ENCODE measurements at regions of chr1 and their contacts with region 1.

Region 1: GRCh38 chr1:238177956-238178645 is 287.4 kb upstream of the ZP4 start:
- DNase-seq: no peak
- ATAC-seq: no peak
- H3K4me3 ChIP-seq: no peak overlapping the region
- H3K4me3 Mint-ChIP-seq: no peak overlapping the region
- H3K27ac ChIP-seq: no peak overlapping the region
- H3K27ac Mint-ChIP-seq: no peak overlapping the region
- H3K4me1 ChIP-seq: no peaks in the 10 kb centered on the region
- H3K4me1 Mint-ChIP-seq: no peaks in the 10 kb centered on the region
- H3K27me3 ChIP-seq: no peaks in the 10 kb centered on the region
- H3K27me3 Mint-ChIP-seq: no peaks in the 10 kb centered on the region
- CTCF ChIP-seq: no peak

Region 2: DNA sequence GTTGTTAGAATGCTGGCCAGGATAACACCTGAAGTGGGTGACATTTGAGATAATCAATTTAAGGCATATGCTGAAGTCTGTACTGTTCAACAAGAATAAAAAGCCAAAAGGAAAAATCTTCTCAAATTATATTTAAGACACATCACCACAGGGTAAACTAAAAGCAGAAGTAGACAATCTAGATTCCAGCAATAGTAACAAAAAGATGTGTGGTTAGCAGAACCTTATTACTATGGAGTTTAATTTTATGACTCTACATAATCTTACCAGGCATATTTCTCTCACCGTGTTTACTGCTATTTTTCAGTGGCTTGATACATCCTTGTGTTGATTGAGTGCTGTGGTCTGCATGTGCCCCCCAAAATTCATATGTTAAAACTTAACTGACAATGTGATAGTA is 13.1 kb after region 1 on chr1:
- CTCF ChIA-PET with region 1: no interaction called
- POLR2A ChIA-PET with region 1: no interaction called
- intact Hi-C with region 1: loop called in 1 of 2 experiments (anchors 2 kb)
- DNase-seq: no peak
- ATAC-seq: no peak
- H3K4me3 ChIP-seq: no peak overlapping the region
- H3K4me3 Mint-ChIP-seq: no peak overlapping the region
- H3K27ac ChIP-seq: no peak overlapping the region
- H3K27ac Mint-ChIP-seq: no peak overlapping the region
- H3K4me1 ChIP-seq: no peaks in the 10 kb centered on the region
- H3K4me1 Mint-ChIP-seq: no peaks in the 10 kb centered on the region
- H3K27me3 ChIP-seq: no peaks in the 10 kb centered on the region
- H3K27me3 Mint-ChIP-seq: no peaks in the 10 kb centered on the region
- CTCF ChIP-seq: no peak

Region 3: GRCh38 chr1:238265866-238266265 is 87.8 kb after region 1 on chr1:
- CTCF ChIA-PET with region 1: no interaction called
- POLR2A ChIA-PET with region 1: no interaction called
- intact Hi-C with region 1: no loop called
- DNase-seq: no peak
- ATAC-seq: no peak
- H3K4me3 ChIP-seq: no peak overlapping the region
- H3K4me3 Mint-ChIP-seq: no peak overlapping the region
- H3K27ac ChIP-seq: no peak overlapping the region
- H3K27ac Mint-ChIP-seq: no peak overlapping the region
- H3K4me1 ChIP-seq: no peaks in the 10 kb centered on the region
- H3K4me1 Mint-ChIP-seq: no peaks in the 10 kb centered on the region
- H3K27me3 ChIP-seq: no peaks in the 10 kb centered on the region
- H3K27me3 Mint-ChIP-seq: no peaks in the 10 kb centered on the region
- CTCF ChIP-seq: no peak